Activated T-helper 2 cell treated with anti-CD3 and anti-CD28 coated beads, Interferon-gamma antibody, Interleukin-2, Interleukin-4, amounts not matched to agents 10 μg/mL and 5 μg/mL and 100 μg/mL, durations not matched to agents 14 hours and 24 hours and 36 hours (primary cell): ENCODE measurements at regions of chr7 and their contacts with region 1.

Region 1: GRCh38 chr7:36115448-36116321 is 37.4 kb upstream of the EEPD1 start:
- DNase-seq: peak; percentile 61
- H3K4me3 Mint-ChIP-seq: no peak overlapping the region
- H3K27ac Mint-ChIP-seq: peak overlapping the region; percentile 47
- H3K4me1 Mint-ChIP-seq: peaks cover 27% of the 10 kb centered on the region
- H3K27me3 Mint-ChIP-seq: peaks cover 21% of the 10 kb centered on the region

Region 2: GRCh38 chr7:35729061-35729783 is 386.5 kb before region 1 on chr7:
- intact Hi-C with region 1: loop called (anchors 10 kb)
- DNase-seq: no peak
- H3K4me3 Mint-ChIP-seq: peak overlapping the region; percentile 3
- H3K27ac Mint-ChIP-seq: peak overlapping the region; percentile 47
- H3K4me1 Mint-ChIP-seq: peaks cover 45% of the 10 kb centered on the region
- H3K27me3 Mint-ChIP-seq: peaks cover 15% of the 10 kb centered on the region

Region 3: GRCh38 chr7:36001546-36001945 is 114.1 kb before region 1 on chr7:
- intact Hi-C with region 1: loop called (anchors 10 kb)
- DNase-seq: no peak
- H3K4me3 Mint-ChIP-seq: no peak overlapping the region
- H3K27ac Mint-ChIP-seq: no peak overlapping the region
- H3K4me1 Mint-ChIP-seq: peaks cover 10% of the 10 kb centered on the region
- H3K27me3 Mint-ChIP-seq: peaks cover 11% of the 10 kb centered on the region

Region 4: GRCh38 chr7:36152756-36153570 is 37.3 kb after region 1 on chr7 and contains the start of gene EEPD1:
- intact Hi-C with region 1: loop called (anchors 5 kb)
- DNase-seq: peak; percentile 99
- H3K4me3 Mint-ChIP-seq: peak within 1 kb of the TSS; percentile 70
- H3K27ac Mint-ChIP-seq: peak within 1 kb of the TSS; percentile 36
- H3K4me1 Mint-ChIP-seq: peaks cover 9% of the 10 kb centered on the region
- H3K27me3 Mint-ChIP-seq: peaks cover 27% of the 10 kb centered on the region
- total RNA-seq, gene EEPD1: 0.57 and 0.67 TPM in 2 replicates

Region 5: GRCh38 chr7:36171503-36171902 is 55.8 kb after region 1 on chr7:
- intact Hi-C with region 1: loop called (anchors 1 kb)
- DNase-seq: no peak
- H3K4me3 Mint-ChIP-seq: no peak overlapping the region
- H3K27ac Mint-ChIP-seq: no peak overlapping the region
- H3K4me1 Mint-ChIP-seq: peaks cover 11% of the 10 kb centered on the region
- H3K27me3 Mint-ChIP-seq: peaks cover 8% of the 10 kb centered on the region